Endothelial cell of umbilical vein (primary cell): ENCODE measurements at regions of chr12 and their contacts with region 1.

Region 1: GRCh38 chr12:6607751-6608591 is 792 bp upstream of the CHD4 start:
- DNase-seq: peak; percentile 42
- H3K4me3 ChIP-seq: no peak overlapping the region
- H3K27ac ChIP-seq: no peak overlapping the region
- H3K4me1 ChIP-seq: peaks cover 36% of the 10 kb centered on the region
- H3K27me3 ChIP-seq: no peaks in the 10 kb centered on the region
- CTCF ChIP-seq: no peak
- POLR2A ChIP-seq: no peak

Region 2: DNA sequence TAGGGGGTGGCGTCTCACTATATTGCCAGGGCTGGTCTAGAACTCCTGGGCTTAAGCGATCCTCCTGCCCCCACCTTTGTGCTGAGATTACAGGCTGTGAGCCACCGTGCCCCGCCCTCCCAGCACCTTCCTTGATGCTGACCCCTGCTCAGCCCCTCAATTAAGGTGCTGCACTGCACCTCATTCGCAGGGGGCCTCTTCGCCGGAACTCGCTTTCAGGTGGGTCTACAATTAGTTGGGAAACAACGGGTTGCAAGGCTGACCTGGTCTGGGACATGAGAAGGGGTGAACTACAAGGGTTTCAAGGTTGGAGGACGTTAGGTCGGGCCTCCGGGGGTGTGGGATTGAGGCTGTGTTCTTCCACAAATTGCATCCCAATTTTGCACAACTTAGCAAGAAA is 38.7 kb before region 1 on chr12:
- CTCF ChIA-PET with region 1: interaction called, 3 read pairs
- POLR2A ChIA-PET with region 1: no interaction called
- dilution Hi-C with region 1: no loop called
- intact Hi-C with region 1: loop called (anchors 2 kb)
- DNase-seq: no peak
- H3K4me3 ChIP-seq: no peak overlapping the region
- H3K27ac ChIP-seq: no peak overlapping the region
- H3K4me1 ChIP-seq: peaks cover 7% of the 10 kb centered on the region
- H3K27me3 ChIP-seq: no peaks in the 10 kb centered on the region
- CTCF ChIP-seq: no peak
- POLR2A ChIP-seq: no peak

Region 3: DNA sequence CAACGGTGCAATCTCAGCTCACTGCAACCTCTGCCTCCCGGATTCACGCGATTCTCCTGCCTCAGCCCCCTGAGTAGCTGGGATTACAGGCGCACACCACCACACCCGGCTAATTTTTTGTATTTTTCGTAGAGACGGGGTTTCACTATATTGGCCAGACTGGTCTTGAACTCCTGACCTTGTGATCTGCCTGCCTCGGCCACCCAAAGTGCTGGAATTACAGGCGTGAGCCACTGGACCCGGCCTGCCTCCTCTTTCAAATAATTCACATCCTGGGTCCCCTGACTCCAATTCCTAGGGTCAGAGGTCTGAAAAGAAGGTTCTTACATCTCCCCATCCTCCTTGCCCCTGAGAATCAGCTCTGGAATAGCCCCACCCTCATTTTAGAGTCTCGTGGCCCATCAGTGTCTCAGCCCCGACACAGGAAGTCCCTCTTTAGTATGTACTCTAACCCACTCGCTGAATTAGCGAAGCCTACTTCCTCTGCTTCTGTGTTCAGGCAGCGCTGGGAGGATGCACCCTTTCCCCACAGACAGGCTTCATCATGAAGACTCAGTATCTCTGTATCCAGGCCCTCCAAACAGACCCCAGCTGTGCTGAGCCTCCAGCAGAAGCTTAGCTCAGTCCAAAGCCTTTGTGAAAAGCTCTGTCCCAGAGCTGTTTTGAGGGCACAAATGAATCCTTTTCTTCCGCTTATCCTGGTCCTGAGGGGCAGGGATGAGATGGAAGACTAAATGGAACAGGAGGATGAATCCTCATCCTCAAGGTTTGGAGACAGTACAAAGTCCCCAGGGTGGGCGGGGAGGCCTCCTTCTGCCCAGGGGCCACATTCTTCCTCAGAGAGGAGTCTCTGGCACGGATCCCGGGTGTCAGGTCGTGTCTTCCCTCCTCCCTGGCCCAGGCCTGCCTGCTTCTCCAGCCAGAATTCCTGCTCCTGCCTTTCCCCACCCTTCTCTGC is 24.3 kb after region 1 on chr12:
- CTCF ChIA-PET with region 1: no interaction called
- POLR2A ChIA-PET with region 1: no interaction called
- dilution Hi-C with region 1: no loop called
- intact Hi-C with region 1: no loop called
- DNase-seq: no peak
- H3K4me3 ChIP-seq: no peak overlapping the region
- H3K27ac ChIP-seq: no peak overlapping the region
- H3K4me1 ChIP-seq: no peaks in the 10 kb centered on the region
- H3K27me3 ChIP-seq: no peaks in the 10 kb centered on the region
- CTCF ChIP-seq: no peak
- POLR2A ChIP-seq: no peak